ENCODE measurements at regions of chr10 and their contacts with region 1.

Region 1: GRCh38 chr10:27783660-27784059 is 38.0 kb upstream of the MKX start:
- DNase-seq: peak; percentile 67

Region 2: DNA sequence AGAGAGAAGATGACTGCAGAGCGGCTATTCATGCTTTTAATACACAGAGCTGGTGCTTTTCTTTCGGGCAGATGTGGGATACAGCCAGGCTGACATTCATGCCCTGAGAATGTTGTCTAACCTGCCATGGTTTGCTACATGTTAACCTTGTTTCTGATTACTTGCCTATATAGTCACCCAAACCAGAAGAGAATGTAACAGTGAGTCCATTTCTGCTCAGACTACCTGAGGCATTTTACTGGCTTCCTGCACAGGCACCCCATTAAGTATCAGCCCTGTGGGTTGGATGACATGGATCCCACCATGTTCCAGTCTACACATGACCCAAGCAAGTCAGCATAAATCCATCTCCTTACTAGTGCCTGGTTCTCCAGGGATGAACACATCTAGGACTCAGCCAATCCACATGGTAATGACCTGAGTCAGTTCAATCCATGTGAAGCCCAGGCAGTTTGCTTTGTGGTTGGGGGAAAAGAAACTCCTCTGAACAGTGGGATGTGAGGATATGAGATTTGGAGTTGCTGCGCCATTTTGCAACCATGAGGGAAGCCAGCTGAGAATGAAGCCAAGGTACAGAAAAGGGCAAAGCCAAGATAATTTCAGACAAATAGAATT is 17.6 kb after region 1 on chr10:
- intact Hi-C with region 1: no loop called
- DNase-seq: no peak

Region 3: DNA sequence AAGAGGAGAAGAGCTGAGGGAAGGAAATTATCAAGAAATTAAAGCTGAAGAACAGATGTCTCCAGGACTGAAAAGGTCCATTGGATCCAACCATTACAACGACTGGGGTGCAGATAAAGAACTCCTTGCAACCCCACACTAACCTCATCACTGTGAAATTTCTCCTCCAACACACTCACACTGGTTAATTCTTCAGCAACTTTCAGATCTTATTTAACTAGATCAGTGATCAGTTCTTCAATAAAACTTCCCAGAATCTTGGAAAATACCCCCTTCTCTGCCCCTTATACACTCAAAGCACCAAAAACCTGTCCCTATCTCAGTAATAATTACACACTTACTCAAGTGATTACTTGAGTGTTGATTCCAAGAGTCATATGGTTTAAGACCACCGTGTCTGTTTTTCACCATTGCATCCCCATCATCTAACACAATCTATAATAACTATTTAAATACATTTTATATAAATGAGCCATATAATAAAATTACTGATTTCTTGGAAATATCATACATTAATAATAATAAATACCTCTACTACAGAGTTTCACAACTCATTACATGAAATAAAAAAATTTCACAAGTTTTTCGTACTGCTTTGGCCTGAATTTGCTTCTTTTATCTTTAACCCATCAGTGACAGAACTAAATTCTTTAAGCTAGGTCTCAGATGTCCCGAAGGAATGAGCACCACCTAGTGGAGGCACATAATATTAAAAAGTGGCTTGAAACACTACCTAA is 395.5 kb after region 1 on chr10:
- intact Hi-C with region 1: loop called in 1 of 2 experiments (anchors 5 kb)
- DNase-seq: no peak